MCF 10A (cell line): ENCODE measurements at regions of chr4 and their contacts with region 1.

Region 1: DNA sequence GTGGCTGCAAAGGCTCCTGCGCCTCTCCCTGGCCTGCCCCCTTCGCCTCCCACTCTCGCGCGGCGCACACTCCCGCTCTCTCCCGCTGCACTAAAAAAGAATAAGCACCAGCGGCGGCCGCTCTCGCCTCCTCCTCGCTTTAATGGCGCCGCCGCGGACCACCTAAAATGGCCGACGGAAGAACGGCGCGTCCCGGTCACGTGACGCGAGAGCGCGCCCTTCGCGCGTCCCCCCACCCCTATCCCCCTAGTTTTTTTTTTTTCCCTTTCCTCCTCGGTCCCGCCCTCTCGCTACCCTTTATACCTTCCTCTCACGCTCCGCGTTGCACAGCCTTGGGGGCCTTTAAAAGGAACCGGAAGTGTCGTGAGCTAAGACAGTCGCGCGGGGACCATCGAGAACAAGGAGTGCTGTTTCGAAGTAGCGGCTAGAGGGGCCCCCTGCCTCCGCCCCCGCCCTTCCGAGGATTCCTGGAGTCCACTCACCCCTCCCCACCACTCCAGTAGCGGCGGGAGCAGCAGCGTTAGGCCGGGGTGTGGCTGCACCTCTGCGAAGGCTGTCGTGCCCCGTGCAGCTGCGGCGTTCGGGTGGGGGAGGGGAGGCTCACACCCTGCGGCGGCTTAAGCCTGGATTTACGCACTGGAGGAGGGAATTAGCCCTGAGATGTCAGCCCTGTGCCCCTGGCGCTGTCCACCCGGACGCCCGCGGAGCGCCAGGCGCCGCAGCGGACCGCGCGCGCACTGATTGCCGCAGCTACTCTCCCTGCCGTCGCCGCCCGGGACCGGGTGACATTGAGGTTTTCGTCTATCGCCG is at the start of gene HNRNPD:
- DNase-seq: peak; percentile 100
- H3K4me3 Mint-ChIP-seq: peak within 1 kb of the TSS; percentile 100
- H3K27ac Mint-ChIP-seq: peak within 1 kb of the TSS; percentile 100
- H3K4me1 Mint-ChIP-seq: peaks cover 31% of the 10 kb centered on the region
- H3K27me3 Mint-ChIP-seq: no peaks in the 10 kb centered on the region
- CTCF ChIP-seq: no peak
- total RNA-seq, gene HNRNPD: 190 and 308 TPM in 2 replicates

Region 2: DNA sequence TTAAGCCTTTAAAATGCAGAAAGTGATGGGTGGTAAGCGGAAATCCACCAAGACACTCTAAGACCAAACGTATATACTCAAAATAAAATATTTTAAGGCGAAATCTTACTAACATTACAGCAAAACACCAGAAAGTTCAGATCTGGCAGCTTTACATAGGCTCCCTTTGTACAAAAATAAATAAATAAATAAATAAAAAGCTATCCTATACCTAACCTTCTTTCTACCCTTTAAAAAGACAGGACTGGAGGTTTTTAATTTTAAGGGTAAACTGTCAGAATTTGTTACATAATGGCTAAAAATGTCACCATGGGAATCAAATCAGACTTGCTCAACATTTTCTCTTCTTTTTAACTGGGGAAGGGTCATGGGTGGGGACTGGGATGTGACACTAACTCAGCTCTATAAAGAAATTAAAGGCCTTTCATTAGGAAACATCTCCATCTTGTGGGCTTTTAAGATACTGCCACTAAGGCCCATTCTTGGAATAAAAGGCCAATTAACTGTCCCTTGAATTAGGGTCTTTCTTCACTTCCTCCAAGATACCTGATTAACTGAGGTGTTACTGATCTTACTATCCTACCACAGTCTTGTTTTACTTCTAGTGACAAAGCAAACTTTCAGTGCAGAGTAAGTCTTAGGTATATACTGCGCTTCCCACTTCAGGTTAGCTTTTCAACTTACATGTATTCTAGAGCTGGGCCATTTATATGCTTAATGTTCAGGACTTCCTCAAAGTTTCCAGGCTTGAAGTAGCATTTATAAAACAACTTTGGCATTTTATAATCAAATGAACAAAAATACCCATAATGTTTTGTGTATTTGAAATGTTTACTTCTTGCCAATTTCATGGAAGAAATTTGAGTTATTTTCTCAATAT is 13.5 kb before region 1 on chr4:
- CTCF ChIA-PET with region 1: interaction called, 23 read pairs
- POLR2A ChIA-PET with region 1: interaction called, 32 read pairs
- intact Hi-C with region 1: no loop called
- DNase-seq: peak; percentile 49
- H3K4me3 Mint-ChIP-seq: no peak overlapping the region
- H3K27ac Mint-ChIP-seq: no peak overlapping the region
- H3K4me1 Mint-ChIP-seq: peaks cover 32% of the 10 kb centered on the region
- H3K27me3 Mint-ChIP-seq: no peaks in the 10 kb centered on the region
- CTCF ChIP-seq: peak; percentile 48

Region 3: DNA sequence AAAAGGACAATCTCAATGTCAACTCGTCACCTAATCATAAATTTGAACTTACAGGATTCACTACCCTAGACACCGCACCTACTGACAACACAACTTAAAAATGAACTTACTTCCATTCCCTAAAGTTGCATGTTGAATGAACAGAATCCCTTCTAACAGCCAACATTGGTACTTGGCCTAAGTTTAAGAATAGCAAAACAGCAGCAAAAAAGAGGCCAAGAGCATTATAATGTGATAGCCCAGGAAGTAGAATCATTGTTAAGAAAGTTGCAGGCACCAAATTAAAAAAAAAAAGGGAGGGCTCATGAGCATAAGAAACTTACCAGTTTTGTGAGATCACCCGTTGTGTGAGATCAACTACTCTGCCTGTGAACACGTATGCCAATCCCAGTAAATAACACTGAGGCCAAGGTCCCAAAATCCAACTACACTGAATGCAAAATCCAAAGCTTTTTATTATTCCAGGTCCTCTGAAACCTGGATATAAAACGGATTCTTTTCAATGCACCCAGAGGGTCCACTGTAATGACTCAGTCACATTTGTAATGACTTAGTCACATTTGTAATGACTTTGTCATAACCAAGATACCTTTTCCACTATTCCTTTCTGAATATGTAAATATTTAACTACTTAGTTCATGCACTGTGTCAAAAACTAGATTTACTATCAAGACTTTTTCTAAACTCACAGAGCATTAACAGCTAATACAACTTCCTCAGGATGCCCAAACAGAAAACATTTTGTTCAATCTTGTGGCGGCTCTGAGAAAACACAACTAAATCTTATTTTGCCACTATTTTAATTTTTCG is 49.4 kb after region 1 on chr4:
- CTCF ChIA-PET with region 1: interaction called, 38 read pairs
- POLR2A ChIA-PET with region 1: interaction called, 240 read pairs
- intact Hi-C with region 1: no loop called
- DNase-seq: no peak
- H3K4me3 Mint-ChIP-seq: no peak overlapping the region
- H3K27ac Mint-ChIP-seq: no peak overlapping the region
- H3K4me1 Mint-ChIP-seq: peaks cover 25% of the 10 kb centered on the region
- H3K27me3 Mint-ChIP-seq: no peaks in the 10 kb centered on the region
- CTCF ChIP-seq: no peak

Region 4: DNA sequence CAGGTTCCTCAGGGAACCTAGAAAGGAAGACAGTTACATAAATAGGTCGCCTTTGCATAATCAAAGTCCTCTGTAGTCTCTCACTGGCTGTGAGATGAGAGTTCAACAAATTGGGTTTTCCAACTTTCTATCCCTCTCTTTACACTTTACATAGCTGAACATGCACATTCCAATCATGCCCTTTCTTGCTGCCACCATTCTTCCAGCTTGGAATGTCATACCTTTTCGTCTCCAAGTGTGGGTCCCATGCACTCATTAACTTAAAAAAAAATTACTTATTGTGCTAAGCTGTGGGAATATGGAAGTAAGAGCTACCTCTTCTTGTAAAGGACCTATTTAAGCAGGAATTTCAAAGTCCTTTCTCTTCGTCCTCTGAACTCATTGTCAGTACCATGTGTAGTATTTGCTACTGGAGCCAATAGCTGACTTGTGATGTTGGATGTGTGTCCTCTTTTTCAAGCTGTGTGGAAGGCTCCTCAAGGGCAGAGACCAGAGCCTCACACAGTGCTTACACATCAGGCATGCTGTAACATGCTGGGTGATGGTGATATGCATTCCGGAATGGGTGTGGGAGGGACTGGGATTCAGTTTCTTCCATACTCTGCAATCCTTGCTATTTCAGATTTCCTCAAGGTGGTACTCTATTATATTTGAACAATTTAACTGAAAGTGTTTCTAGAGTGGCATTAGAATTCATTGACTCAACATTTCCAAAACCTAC is 63.4 kb after region 1 on chr4:
- CTCF ChIA-PET with region 1: interaction called, 4 read pairs
- POLR2A ChIA-PET with region 1: interaction called, 40 read pairs
- intact Hi-C with region 1: no loop called
- DNase-seq: peak; percentile 91
- H3K4me3 Mint-ChIP-seq: peak overlapping the region; percentile 45
- H3K27ac Mint-ChIP-seq: peak overlapping the region; percentile 63
- H3K4me1 Mint-ChIP-seq: peaks cover 33% of the 10 kb centered on the region
- H3K27me3 Mint-ChIP-seq: no peaks in the 10 kb centered on the region
- CTCF ChIP-seq: no peak

Region 5: GRCh38 chr4:82900331-82901128 is 526.5 kb after region 1 on chr4 and contains the start of gene THAP9:
- CTCF ChIA-PET with region 1: interaction called, 3 read pairs
- POLR2A ChIA-PET with region 1: interaction called, 15 read pairs
- intact Hi-C with region 1: no loop called
- DNase-seq: peak; percentile 99
- H3K4me3 Mint-ChIP-seq: no peak within 1 kb of the TSS
- H3K27ac Mint-ChIP-seq: no peak within 1 kb of the TSS
- H3K4me1 Mint-ChIP-seq: peaks cover 10% of the 10 kb centered on the region
- H3K27me3 Mint-ChIP-seq: no peaks in the 10 kb centered on the region
- CTCF ChIP-seq: no peak
- total RNA-seq, gene THAP9: 3.6 and 4.0 TPM in 2 replicates